Aorta (tissue), 5 donors: ENCODE measurements at regions of chr4 and their contacts with region 1.

Region 1: GRCh38 chr4:83012687-83013419 is 2.2 kb upstream of the LIN54 start:
- DNase-seq: peak; percentile 98 to 99
- ATAC-seq: peak; percentile 99
- H3K4me3 ChIP-seq: peak overlapping the region; percentile 82 to 99
- H3K27ac ChIP-seq: peak overlapping the region; percentile 46 to 89
- H3K4me1 ChIP-seq: no peaks in the 10 kb centered on the region
- H3K27me3 ChIP-seq: no peaks in the 10 kb centered on the region

Region 2: DNA sequence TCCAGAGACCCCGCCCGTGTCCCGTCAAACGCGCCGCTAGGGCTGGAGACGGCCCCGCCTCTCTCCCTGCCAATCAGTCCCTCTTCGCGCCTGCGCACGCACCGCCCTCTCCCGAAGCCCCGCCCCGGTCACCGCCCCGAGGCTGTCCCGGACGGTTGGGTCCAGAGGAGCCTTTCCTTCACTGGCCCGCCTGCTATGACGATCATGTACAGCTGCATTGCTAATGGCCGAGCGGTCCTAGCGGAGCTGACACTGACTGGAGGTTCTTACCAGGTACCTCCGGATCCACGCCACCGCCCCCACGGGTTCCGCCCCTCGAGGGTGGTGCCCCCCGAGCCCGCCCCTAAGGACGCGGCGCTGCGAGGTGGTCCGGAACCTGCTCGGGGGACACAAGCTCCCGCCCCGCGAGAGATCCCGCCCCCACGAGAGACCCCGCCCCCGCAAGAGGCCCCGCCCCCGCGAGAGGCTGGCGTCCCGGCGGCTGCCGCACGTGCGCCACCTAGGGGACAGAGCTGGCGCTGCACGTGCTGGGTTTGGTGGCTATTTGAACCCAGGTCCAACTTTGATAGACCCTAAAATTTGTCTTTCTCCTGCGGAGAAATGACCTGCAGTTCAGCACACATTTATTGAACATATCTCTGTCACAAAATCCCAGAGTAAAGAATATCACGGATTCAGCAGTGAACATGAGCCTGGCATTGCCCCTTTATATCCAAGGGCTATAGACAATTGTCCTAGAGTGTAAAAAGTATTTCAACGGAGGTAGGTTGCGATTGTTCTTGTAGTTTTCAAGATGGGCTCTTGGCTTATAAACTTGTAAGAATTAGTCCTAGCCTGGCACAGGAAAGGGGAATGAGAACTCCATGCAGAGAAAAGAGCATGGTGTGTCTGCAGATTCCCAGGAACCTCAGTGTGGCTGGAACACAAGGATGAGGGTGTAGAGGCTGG is 727.7 kb before region 1 on chr4:
- intact Hi-C with region 1: loop called in 1 of 2 experiments (anchors 10 kb)
- DNase-seq: peak; percentile 100
- ATAC-seq: peak; percentile 100
- H3K4me3 ChIP-seq: peak overlapping the region in 1 of 2 donors; percentile 38
- H3K27ac ChIP-seq: no peak overlapping the region
- H3K4me1 ChIP-seq: no peaks in the 10 kb centered on the region
- H3K27me3 ChIP-seq: no peaks in the 10 kb centered on the region

Region 3: GRCh38 chr4:82739316-82740179 is 273.3 kb before region 1 on chr4:
- intact Hi-C with region 1: no loop called
- DNase-seq: peak; percentile 64 to 83
- ATAC-seq: peak; percentile 91
- H3K4me3 ChIP-seq: no peak overlapping the region
- H3K27ac ChIP-seq: no peak overlapping the region
- H3K4me1 ChIP-seq: no peaks in the 10 kb centered on the region
- H3K27me3 ChIP-seq: no peaks in the 10 kb centered on the region

Region 4: DNA sequence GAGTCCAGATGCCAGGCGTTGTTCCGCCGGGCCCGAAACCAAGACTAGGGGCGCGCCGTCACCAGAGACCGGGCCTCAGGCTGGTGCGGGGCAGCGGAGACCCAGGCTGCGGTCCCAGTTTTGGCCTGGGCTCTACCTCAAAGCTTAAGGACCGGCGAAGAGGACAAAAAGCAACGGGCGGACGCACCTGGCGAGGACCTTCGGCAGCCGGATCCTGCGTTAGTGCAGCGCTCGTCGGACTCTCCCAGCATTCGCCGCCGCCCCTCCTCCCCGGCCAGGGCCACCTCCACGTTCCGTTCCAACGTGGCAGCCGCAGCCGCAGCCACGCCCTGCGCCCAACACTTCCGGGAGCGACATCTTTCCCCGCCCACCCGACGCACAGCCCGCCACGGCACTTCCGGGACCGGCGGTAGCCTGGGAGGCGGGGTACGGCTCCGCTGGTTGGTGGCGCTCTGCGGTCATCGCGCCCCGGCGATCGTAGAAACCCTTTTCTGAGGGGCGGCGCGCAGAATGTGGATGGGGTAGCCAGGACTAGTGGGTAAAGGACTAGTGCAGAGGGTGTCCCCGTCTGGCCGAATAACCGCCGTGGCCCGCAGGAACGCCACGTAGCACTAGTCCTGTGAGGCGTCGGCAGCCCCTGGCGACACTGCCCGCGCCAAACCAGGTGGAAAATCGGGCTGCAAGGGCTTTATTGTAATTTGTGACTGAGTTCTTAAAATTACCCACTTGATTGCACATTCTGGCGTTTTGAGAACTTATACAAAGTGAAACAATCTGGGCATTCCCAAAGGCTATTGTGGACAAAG is 121.7 kb before region 1 on chr4 and contains the start of gene SEC31A:
- intact Hi-C with region 1: loop called in 1 of 2 experiments (anchors 10 kb)
- DNase-seq: peak; percentile 98 to 99
- ATAC-seq: peak; percentile 100
- H3K4me3 ChIP-seq: peak within 1 kb of the TSS; percentile 85 to 94
- H3K27ac ChIP-seq: peak within 1 kb of the TSS; percentile 86 to 99
- H3K4me1 ChIP-seq: peaks cover 0 to 1% of the 10 kb centered on the region in 2 donors
- H3K27me3 ChIP-seq: no peaks in the 10 kb centered on the region
- total RNA-seq, gene SEC31A: 297 to 338 TPM

Region 5: DNA sequence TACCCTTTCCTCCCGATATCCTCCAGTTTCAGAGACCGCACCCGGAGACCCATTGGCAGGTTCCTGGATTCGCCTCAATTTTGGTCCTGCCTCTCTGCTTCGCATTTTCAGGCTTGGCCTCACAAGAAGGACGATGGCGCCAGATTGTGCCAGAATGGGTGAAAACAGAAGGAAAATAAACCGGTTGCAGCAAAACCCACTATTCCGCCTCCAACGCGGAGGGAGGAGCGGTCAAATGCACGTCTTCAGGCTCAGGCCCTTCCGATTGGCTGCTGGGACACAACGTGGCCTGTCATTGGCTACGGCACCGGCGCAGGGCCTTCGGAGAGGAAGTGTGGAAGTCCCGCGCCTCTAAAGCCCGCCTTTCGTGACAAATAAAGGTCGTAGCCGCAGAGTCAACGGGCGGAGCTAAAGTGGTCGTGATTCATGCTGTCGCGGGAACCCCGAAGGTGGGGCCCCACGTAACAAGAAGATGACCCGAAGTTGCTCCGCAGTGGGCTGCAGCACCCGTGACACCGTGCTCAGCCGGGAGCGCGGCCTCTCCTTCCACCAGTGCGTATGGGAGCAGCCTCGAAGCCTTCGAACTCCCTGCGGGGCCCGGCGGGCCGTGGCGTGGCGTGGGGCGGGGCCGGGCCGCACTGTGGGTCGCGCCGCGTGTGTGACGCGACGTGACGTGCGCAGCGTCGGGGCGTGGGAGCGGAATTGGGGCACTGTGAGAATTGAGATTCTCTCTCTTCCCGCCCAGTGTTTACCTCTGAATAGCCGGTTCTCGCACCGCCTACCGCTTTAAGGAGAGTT is 112.3 kb before region 1 on chr4 and contains the start of gene THAP9:
- intact Hi-C with region 1: loop called (anchors 5 to 10 kb)
- DNase-seq: peak; percentile 99
- ATAC-seq: peak; percentile 99
- H3K4me3 ChIP-seq: peak within 1 kb of the TSS; percentile 90 to 91
- H3K27ac ChIP-seq: peak within 1 kb of the TSS; percentile 85 to 96
- H3K4me1 ChIP-seq: peaks cover 0 to 2% of the 10 kb centered on the region in 2 donors
- H3K27me3 ChIP-seq: no peaks in the 10 kb centered on the region
- total RNA-seq, gene THAP9: 2.6 to 6.5 TPM

Region 6: DNA sequence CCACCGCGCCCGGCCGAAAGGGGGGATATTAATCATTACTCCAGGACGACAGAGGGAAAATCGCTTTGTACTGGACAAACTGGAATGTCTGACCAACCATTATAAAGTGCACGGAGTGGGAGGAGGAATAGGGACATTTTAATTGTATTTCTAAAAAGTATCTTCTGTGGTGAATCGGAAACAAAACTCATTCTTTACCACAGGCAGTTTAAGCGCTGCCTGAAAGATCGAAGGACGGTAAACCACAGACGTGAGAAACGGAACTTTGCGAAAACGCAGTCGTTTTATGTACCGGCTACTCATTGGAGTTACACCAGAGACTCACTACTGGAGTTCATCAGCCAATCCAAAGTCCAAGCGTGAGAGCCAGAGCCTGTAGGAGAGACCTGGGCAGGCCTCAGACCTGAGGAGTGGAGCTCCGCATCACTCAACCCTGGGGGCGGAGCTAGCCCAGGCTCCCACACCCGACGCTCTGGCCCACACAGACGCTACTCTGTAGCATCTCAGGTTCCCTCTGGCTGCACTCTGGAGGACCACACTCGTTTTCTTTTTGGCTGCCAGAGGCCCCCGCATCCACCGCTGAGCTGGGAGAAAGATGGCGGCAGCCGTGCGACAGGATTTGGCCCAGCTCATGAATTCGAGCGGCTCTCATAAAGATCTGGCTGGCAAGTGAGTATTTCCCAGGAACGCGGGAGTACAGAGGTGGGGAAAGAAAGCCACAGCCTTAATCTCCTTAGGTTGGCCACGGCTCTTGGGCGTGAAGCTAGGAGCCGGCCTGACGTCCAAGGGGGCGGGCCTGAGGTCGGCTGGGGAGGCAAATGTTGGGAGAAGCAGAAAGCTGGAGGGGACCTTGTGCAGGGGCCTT is 22.0 kb after region 1 on chr4 and contains the start of gene COPS4:
- intact Hi-C with region 1: loop called (anchors 1 to 2 kb)
- DNase-seq: peak; percentile 96 to 98
- ATAC-seq: peak; percentile 100
- H3K4me3 ChIP-seq: peak within 1 kb of the TSS; percentile 61 to 95
- H3K27ac ChIP-seq: peak within 1 kb of the TSS; percentile 80 to 87
- H3K4me1 ChIP-seq: peaks cover 0 to 5% of the 10 kb centered on the region in 2 donors
- H3K27me3 ChIP-seq: no peaks in the 10 kb centered on the region
- total RNA-seq, gene COPS4: 35.3 to 35.7 TPM